ENCODE measurements at regions of chr7 and their contacts with region 1.

Region 1: GRCh38 chr7:74206589-74207120 is 3.2 kb upstream of the LAT2 start:
- DNase-seq: peak; percentile 87
- CTCF ChIP-seq: peak; percentile 96

Region 2: GRCh38 chr7:74173866-74174605 is 32.6 kb before region 1 on chr7 and contains the start of gene EIF4H:
- CTCF ChIA-PET with region 1: interaction called, 19 read pairs
- POLR2A ChIA-PET with region 1: interaction called, 3 read pairs
- DNase-seq: peak; percentile 93
- CTCF ChIP-seq: no peak

Region 3: GRCh38 chr7:74217455-74218342 is 11.0 kb after region 1 on chr7:
- CTCF ChIA-PET with region 1: interaction called, 75 read pairs
- POLR2A ChIA-PET with region 1: interaction called, 3 read pairs
- DNase-seq: peak; percentile 64
- CTCF ChIP-seq: no peak

Region 4: DNA sequence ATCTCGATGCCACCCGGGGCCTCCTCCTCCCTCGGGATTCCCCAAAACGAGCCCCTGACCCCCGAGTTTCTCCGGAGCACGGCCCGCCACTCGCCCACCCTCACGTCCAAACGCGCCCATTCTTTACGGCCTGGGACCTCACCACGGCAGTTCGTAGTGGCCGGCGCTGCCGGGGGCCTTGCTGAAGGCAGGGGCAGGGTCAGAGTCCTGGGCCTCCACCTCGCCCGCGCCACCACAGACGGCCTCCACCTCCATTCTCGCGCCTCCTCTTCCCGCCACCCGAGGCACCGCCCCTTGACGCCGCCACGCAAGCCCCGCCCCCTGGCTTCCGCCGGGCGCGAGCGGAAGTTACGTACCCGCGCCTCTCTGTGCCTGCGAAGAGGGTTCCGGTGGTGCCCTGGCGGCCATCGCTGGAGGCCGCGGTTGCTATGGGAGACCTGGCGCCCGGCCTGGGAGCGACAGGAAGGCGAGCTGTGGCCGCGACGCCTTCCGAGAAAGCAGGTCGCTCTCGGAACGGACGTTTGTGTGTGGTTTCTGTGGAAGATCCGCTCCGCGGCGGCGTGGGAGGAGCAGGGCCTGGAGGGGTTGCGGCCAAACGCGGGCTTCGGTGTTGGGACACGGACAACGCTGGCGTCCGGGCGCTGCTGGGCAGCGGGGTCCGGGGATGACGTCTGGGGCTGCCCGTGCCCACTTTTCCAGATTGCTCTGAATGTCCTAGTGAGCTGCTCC is 47.6 kb after region 1 on chr7 and contains the start of gene RFC2:
- CTCF ChIA-PET with region 1: interaction called, 14 read pairs
- POLR2A ChIA-PET with region 1: no interaction called
- DNase-seq: peak; percentile 98
- CTCF ChIP-seq: no peak

Region 5: GRCh38 chr7:74317146-74317782 is 110.6 kb after region 1 on chr7:
- CTCF ChIA-PET with region 1: interaction called, 17 read pairs
- POLR2A ChIA-PET with region 1: no interaction called
- DNase-seq: no peak
- CTCF ChIP-seq: no peak

Region 6: GRCh38 chr7:74412056-74412455 is 205.4 kb after region 1 on chr7:
- CTCF ChIA-PET with region 1: interaction called, 12 read pairs
- POLR2A ChIA-PET with region 1: no interaction called
- DNase-seq: no peak
- CTCF ChIP-seq: no peak